AG04449 (cell line): ENCODE measurements at regions of chr17 and their contacts with region 1.

Region 1: DNA sequence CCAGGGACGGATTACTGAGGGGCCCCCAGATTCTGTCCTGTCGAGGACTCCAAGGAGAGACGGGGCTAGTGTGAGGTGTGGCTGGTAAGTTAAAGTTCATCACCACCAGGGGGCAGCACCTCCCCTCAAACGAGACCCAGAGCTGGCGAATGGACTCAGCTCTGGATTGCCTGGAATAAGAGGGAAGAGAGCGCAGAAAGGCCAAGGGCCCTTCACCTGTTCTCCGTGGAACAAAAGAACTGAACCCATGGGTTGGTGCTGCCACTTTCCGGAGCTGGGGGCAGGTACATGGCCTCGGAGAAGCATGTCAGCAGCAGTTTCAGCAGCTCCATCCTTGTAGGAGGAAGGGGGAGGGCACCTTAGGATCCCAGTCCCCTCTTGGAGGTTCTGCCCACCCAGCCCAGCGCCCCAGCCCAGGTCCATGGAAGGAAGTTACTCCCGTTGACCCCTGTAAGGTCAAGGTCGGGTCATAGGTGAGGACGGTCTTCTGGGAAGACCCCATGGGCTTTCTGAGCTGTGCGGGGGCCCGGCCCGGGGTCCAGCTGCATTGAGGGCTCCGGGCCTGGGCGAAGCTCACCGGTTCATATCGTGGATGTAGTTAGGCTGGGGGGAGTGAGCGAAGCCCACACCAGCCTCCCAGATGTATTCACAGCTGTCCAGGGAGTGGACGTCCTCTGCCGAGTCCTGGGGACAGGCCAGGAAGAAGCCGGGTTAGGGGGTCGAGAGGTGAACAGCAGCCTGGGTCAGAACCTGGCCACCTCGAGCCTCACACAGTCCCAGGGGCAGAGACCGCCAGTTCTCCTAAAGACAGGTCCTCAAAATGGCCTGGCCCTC is 10.7 kb downstream of the HID1 start:
- DNase-seq: peak; percentile 10
- H3K4me3 ChIP-seq: no peak overlapping the region
- CTCF ChIP-seq: peak; percentile 76

Region 2: GRCh38 chr17:74923533-74924249 is 38.2 kb before region 1 on chr17:
- CTCF ChIA-PET with region 1: interaction called, 109 read pairs
- POLR2A ChIA-PET with region 1: no interaction called
- DNase-seq: no peak
- H3K4me3 ChIP-seq: no peak overlapping the region
- CTCF ChIP-seq: peak; percentile 83

Region 3: GRCh38 chr17:74981979-74982662 is 20.2 kb after region 1 on chr17:
- CTCF ChIA-PET with region 1: interaction called, 26 read pairs
- POLR2A ChIA-PET with region 1: interaction called, 3 read pairs
- DNase-seq: no peak
- H3K4me3 ChIP-seq: peak overlapping the region; percentile 72
- CTCF ChIP-seq: no peak

Region 4: GRCh38 chr17:75024686-75025397 is 63.0 kb after region 1 on chr17:
- CTCF ChIA-PET with region 1: interaction called, 12 read pairs
- POLR2A ChIA-PET with region 1: no interaction called
- DNase-seq: no peak
- H3K4me3 ChIP-seq: no peak overlapping the region
- CTCF ChIP-seq: no peak

Region 5: GRCh38 chr17:75131280-75132017 is 169.6 kb after region 1 on chr17 and contains the start of gene NT5C:
- CTCF ChIA-PET with region 1: interaction called, 20 read pairs
- POLR2A ChIA-PET with region 1: no interaction called
- DNase-seq: no peak
- H3K4me3 ChIP-seq: peak within 1 kb of the TSS; percentile 73
- CTCF ChIP-seq: peak; percentile 81